ENCODE measurements at regions of chr2 and their contacts with region 1.

Region 1: GRCh38 chr2:217895070-217895635 is 107.6 kb downstream of the TNS1 start:
- DNase-seq: no peak
- H3K4me3 ChIP-seq: no peak overlapping the region
- H3K27ac ChIP-seq: peak overlapping the region; percentile 94 to 98 (median 98)
- H3K4me1 ChIP-seq: peaks cover 0 to 79% (median 76%) of the 10 kb centered on the region in 4 donors
- H3K27me3 ChIP-seq: no peaks in the 10 kb centered on the region
- CTCF ChIP-seq: no peak
- EP300 ChIP-seq: no peak
- POLR2A ChIP-seq: no peak

Region 2: GRCh38 chr2:217875138-217875537 is 20.0 kb before region 1 on chr2:
- intact Hi-C with region 1: loop called (anchors 2 kb)
- DNase-seq: no peak
- H3K4me3 ChIP-seq: no peak overlapping the region
- H3K27ac ChIP-seq: peak overlapping the region; percentile 74 to 98 (median 86)
- H3K4me1 ChIP-seq: peaks cover 0 to 99% (median 89%) of the 10 kb centered on the region in 4 donors
- H3K27me3 ChIP-seq: no peaks in the 10 kb centered on the region
- CTCF ChIP-seq: no peak
- EP300 ChIP-seq: no peak
- POLR2A ChIP-seq: no peak

Region 3: GRCh38 chr2:217905395-217905794 is 10.2 kb after region 1 on chr2:
- intact Hi-C with region 1: no loop called
- DNase-seq: peak; percentile 91
- H3K4me3 ChIP-seq: peak overlapping the region in 2 of 4 donors; percentile 16
- H3K27ac ChIP-seq: peak overlapping the region; percentile 94 to 98 (median 98)
- H3K4me1 ChIP-seq: peaks cover 0 to 100% (median 100%) of the 10 kb centered on the region in 4 donors
- H3K27me3 ChIP-seq: no peaks in the 10 kb centered on the region
- CTCF ChIP-seq: no peak
- EP300 ChIP-seq: no peak
- POLR2A ChIP-seq: no peak

Measured in sigmoid colon (tissue), 7 donors.